ENCODE measurements at regions of chr7 and their contacts with region 1.

Region 1: GRCh38 chr7:131507592-131508331 is 48.7 kb downstream of the PODXL start:
- DNase-seq: peak; percentile 92
- ATAC-seq: peak; percentile 89
- H3K4me3 Mint-ChIP-seq: no peak overlapping the region
- H3K27ac Mint-ChIP-seq: no peak overlapping the region
- H3K4me1 Mint-ChIP-seq: peaks cover 21% of the 10 kb centered on the region
- H3K27me3 Mint-ChIP-seq: peaks cover 15% of the 10 kb centered on the region

Region 2: GRCh38 chr7:130463553-130464434 is 1044.0 kb before region 1 on chr7:
- CTCF ChIA-PET with region 1: no interaction called
- POLR2A ChIA-PET with region 1: no interaction called
- intact Hi-C with region 1: no loop called
- DNase-seq: no peak
- ATAC-seq: no peak
- H3K4me3 Mint-ChIP-seq: no peak overlapping the region
- H3K27ac Mint-ChIP-seq: no peak overlapping the region
- H3K4me1 Mint-ChIP-seq: peaks cover 3% of the 10 kb centered on the region
- H3K27me3 Mint-ChIP-seq: no peaks in the 10 kb centered on the region

Region 3: DNA sequence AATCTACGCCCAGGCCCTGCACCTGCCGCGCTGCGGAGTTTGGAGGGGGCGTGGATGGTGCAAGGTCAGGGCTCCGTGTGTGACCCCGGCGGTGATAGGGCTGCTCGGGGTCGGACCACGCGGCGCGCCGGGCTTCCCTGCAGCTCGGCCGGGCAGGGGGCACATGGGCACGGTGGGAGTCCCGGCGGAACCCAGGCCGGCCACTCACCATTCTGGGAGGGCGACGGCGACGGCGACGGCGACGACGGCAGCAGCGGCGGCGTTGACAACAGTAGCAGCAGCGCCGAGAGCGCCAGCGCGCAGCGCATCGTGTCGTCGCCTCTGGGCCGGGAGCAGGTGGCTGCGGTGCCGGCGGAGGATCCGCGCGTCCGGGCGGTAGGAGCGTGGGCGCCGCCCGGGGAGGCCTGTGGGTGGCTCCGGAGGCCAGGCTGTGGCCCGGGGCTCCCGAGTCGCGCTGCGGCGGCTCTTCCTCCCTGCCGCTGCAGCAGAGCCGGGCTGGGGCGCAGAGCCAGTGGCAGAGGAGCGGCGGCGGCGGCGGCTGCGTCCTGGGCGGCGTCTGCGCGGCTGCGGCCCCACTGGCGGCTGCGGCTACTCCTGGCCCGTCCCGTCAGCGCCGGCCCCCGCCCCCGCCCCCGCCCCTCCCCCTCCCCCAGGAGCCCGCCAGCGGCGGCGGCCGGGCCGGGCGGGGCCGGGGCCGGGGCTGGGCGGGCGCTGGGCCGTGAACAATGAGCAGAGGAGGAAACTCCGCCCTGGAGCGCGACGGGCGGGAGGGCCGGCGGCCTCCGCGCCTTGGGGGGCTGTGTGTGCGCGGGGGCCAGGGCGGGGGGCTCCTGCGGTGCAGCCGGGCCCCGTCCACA is 48.5 kb after region 1 on chr7 and contains the start of gene PODXL:
- CTCF ChIA-PET with region 1: no interaction called
- POLR2A ChIA-PET with region 1: no interaction called
- intact Hi-C with region 1: loop called in 1 of 2 experiments (anchors 1 kb)
- DNase-seq: peak; percentile 72
- ATAC-seq: peak; percentile 78
- H3K4me3 Mint-ChIP-seq: peak within 1 kb of the TSS; percentile 40
- H3K27ac Mint-ChIP-seq: no peak within 1 kb of the TSS
- H3K4me1 Mint-ChIP-seq: peaks cover 8% of the 10 kb centered on the region
- H3K27me3 Mint-ChIP-seq: peaks cover 48% of the 10 kb centered on the region
- total RNA-seq, gene PODXL: 0.48 to 0.49 TPM

Region 4: DNA sequence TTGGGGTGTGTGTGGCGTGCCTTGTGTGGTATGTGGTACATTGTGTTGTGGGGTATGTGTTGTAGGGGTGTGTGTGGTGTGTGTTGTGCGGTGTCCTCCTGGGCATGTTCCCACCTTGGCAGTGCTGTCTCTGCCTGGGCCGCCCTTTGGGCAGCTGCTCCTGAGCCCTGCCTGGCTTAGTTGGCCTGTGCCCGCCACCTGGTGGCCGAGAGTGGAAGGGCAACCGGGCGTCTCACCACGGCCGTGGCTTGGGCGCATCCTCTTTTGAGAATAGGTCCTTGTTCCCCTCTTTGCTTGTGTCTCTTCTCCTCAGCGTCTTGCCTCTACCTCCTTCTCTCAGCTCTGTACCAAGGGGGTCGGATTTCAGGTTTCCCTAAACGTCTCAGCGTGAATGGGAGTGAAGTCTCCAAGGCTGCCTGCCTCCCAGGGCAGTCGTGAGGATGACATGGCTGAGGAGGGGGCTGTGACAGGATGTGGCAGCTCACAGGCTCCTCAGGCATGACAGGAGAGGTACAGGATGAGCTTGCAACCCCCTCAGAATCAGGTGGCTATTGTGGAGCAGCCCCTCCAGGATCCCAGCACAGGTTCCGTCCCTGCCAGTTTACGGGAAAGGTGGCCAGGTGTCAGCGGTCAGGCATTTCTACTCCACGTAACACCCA is 147.0 kb after region 1 on chr7:
- CTCF ChIA-PET with region 1: interaction called, 19 read pairs
- POLR2A ChIA-PET with region 1: interaction called, 3 read pairs
- intact Hi-C with region 1: loop called (anchors 1 kb)
- DNase-seq: peak; percentile 92
- ATAC-seq: peak; percentile 96
- H3K4me3 Mint-ChIP-seq: no peak overlapping the region
- H3K27ac Mint-ChIP-seq: no peak overlapping the region
- H3K4me1 Mint-ChIP-seq: no peaks in the 10 kb centered on the region
- H3K27me3 Mint-ChIP-seq: peaks cover 8% of the 10 kb centered on the region